Posterior vena cava (tissue), 2 donors: ENCODE measurements at regions of chr6 and their contacts with region 1.

Region 1: DNA sequence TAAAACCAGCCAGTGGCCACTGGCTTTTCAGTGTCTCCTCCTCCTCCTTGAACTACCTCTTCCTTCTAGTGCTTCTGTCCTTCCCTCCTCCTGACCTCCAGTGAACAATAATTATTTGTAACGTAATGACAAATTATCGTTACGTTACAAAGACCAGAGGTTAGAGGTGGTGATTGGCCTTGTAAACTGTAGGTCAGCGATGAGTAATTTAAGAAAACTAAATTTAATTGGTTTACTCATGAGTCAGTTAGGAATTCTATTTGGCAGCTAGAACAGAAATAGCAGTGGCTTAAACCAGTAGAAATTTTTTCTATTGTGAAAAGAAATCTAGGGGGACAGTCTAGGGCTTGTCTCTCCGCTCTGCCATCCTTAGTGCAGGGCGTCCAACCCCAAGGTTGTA is 38.8 kb downstream of the PPARD start:
- DNase-seq: no peak

Region 2: GRCh38 chr6:34556031-34556892 is 824.9 kb before region 1 on chr6 and contains the start of gene SPDEF:
- intact Hi-C with region 1: loop called in 1 of 2 experiments (anchors 5 kb)
- DNase-seq: no peak
- total RNA-seq, gene SPDEF: not detected

Region 3: DNA sequence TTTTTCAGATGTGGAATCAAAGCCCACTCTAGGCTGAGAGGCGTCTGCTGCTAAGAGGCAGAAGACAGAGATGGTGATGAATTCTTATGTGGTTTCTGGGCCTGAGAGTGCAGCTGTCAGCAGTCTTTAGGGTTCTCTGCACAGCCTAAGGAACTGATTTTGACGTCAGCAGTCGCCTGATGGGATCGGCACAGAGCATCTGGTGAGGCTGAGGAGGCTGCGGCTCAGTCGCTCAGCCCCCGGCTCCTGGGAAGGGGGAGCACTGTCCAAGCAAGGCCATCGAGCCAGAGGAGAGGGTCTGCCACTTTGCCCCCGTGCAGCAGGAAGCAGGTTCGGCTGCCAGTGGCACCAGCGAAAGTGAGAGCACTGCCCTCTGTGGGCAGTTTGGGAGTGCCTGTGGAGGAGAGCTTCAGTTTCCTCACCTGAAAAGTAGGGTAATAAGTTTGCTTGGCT is 332.5 kb before region 1 on chr6:
- intact Hi-C with region 1: no loop called
- DNase-seq: no peak

Region 4: DNA sequence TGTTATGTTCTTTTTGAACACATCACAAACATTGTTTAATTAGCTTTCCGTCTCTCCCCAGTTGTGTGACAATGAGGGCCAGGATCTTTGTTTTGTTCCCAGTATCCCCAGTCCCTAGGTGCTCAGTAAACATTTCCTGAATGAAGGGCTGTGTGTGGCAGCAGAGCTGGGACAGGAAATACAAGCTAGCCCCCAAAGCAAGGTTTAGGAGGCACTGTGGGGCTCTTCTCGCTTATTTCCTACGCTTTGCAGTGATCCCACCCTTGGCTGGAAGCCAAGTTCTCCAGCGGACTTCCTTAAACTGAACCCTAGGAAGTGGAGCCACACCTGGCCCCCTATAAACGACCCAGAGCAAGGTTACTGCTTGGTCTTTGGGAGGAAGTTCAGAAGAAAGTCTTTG is 70.3 kb after region 1 on chr6:
- intact Hi-C with region 1: loop called in 1 of 2 experiments (anchors 2 kb)
- DNase-seq: no peak